PC-9 (cell line): ENCODE measurements at regions of chr7 and their contacts with region 1.

Region 1: GRCh38 chr7:94449148-94449725 is 54.5 kb downstream of the COL1A2 start:
- DNase-seq: peak in 1 of 2 experiments; percentile 37
- H3K4me3 ChIP-seq: no peak overlapping the region
- H3K27ac ChIP-seq: no peak overlapping the region
- H3K4me1 ChIP-seq: peaks cover 5% of the 10 kb centered on the region; the same call in 1 of the 2 replicates
- H3K27me3 ChIP-seq: no peaks in the 10 kb centered on the region
- CTCF ChIP-seq: peak; percentile 84

Region 2: DNA sequence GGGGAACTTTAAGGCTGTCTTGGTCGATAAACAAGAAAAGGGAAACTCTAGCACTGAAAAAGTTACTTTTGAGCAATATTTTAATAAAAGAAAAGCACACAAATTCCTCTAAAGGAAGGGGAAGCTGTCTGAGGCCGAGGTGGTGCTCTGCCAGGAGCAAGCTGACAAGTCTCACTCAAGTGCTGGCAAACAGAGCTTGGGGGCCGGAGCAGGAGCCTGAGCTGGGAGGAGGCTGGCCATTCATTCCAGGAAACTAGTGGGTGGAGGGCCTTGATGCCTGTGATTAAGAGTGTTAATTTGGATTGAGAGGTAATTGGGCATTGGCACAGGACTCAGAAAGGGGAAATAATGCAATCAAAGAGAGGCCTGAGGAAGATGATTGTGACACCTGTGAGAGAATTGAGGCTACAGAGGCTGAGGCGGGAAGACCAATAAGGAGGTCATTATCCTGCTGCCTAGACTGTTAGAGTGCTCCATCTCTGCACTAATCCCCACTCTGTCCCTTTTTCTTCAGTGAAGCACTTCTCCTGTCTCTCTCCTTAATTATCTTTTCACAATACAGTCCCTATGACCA is 209.5 kb before region 1 on chr7:
- CTCF ChIA-PET with region 1: no interaction called
- POLR2A ChIA-PET with region 1: no interaction called
- intact Hi-C with region 1: no loop called
- DNase-seq: no peak
- H3K4me3 ChIP-seq: no peak overlapping the region
- H3K27ac ChIP-seq: no peak overlapping the region
- H3K4me1 ChIP-seq: 0 out of 2 replicates have a peak, but pooled peaks cover 7% of the 10 kb centered on the region
- H3K27me3 ChIP-seq: no peaks in the 10 kb centered on the region
- CTCF ChIP-seq: no peak

Region 3: GRCh38 chr7:94289071-94289470 is 160.2 kb before region 1 on chr7:
- CTCF ChIA-PET with region 1: no interaction called
- POLR2A ChIA-PET with region 1: no interaction called
- intact Hi-C with region 1: loop called (anchors 1 kb)
- DNase-seq: peak; percentile 48 to 57
- H3K4me3 ChIP-seq: no peak overlapping the region
- H3K27ac ChIP-seq: no peak overlapping the region
- H3K4me1 ChIP-seq: no peaks in the 10 kb centered on the region
- H3K27me3 ChIP-seq: no peaks in the 10 kb centered on the region
- CTCF ChIP-seq: peak; percentile 82

Region 4: GRCh38 chr7:94338921-94339371 is 110.3 kb before region 1 on chr7:
- CTCF ChIA-PET with region 1: no interaction called
- POLR2A ChIA-PET with region 1: no interaction called
- intact Hi-C with region 1: no loop called
- DNase-seq: no peak
- H3K4me3 ChIP-seq: no peak overlapping the region
- H3K27ac ChIP-seq: no peak overlapping the region
- H3K4me1 ChIP-seq: no peaks in the 10 kb centered on the region
- H3K27me3 ChIP-seq: no peaks in the 10 kb centered on the region
- CTCF ChIP-seq: no peak

Region 5: GRCh38 chr7:94657771-94658693 is 208.8 kb after region 1 on chr7:
- CTCF ChIA-PET with region 1: no interaction called
- POLR2A ChIA-PET with region 1: no interaction called
- intact Hi-C with region 1: loop called (anchors 1 kb)
- DNase-seq: peak; percentile 82 to 86
- H3K4me3 ChIP-seq: no peak overlapping the region
- H3K27ac ChIP-seq: no peak overlapping the region
- H3K4me1 ChIP-seq: peaks cover 17% of the 10 kb centered on the region
- H3K27me3 ChIP-seq: no peaks in the 10 kb centered on the region
- CTCF ChIP-seq: no peak

Region 6: GRCh38 chr7:94957061-94957460 is 507.8 kb after region 1 on chr7:
- CTCF ChIA-PET with region 1: interaction called, 13 read pairs
- POLR2A ChIA-PET with region 1: no interaction called
- intact Hi-C with region 1: no loop called
- DNase-seq: no peak
- H3K4me3 ChIP-seq: no peak overlapping the region
- H3K27ac ChIP-seq: no peak overlapping the region
- H3K4me1 ChIP-seq: no peaks in the 10 kb centered on the region
- H3K27me3 ChIP-seq: no peaks in the 10 kb centered on the region
- CTCF ChIP-seq: no peak

Region 7: GRCh38 chr7:95199779-95200558 is 750.7 kb after region 1 on chr7:
- CTCF ChIA-PET with region 1: interaction called, 5 read pairs
- POLR2A ChIA-PET with region 1: no interaction called
- intact Hi-C with region 1: loop called (anchors 1 kb)
- DNase-seq: peak in 1 of 2 experiments; percentile 33
- H3K4me3 ChIP-seq: no peak overlapping the region
- H3K27ac ChIP-seq: no peak overlapping the region
- H3K4me1 ChIP-seq: no peaks in the 10 kb centered on the region
- H3K27me3 ChIP-seq: no peaks in the 10 kb centered on the region
- CTCF ChIP-seq: peak; percentile 74

Region 8: GRCh38 chr7:95476904-95477594 is 1027.8 kb after region 1 on chr7:
- CTCF ChIA-PET with region 1: interaction called, 12 read pairs
- POLR2A ChIA-PET with region 1: no interaction called
- intact Hi-C with region 1: loop called (anchors 1 kb)
- DNase-seq: peak; percentile 46 to 54
- H3K4me3 ChIP-seq: peak overlapping the region; percentile 28; the same call in 1 of the 2 replicates
- H3K27ac ChIP-seq: no peak overlapping the region
- H3K4me1 ChIP-seq: no peaks in the 10 kb centered on the region
- H3K27me3 ChIP-seq: no peaks in the 10 kb centered on the region
- CTCF ChIP-seq: peak; percentile 87